ENCODE measurements at regions of chr21 and their contacts with region 1.

Region 1: GRCh38 chr21:42524349-42525151 is 10.9 kb downstream of the SLC37A1 start:
- DNase-seq: no peak
- H3K4me3 Mint-ChIP-seq: no peak overlapping the region
- H3K27ac Mint-ChIP-seq: no peak overlapping the region
- H3K4me1 Mint-ChIP-seq: peaks cover 49% of the 10 kb centered on the region
- H3K27me3 Mint-ChIP-seq: peaks cover 2% of the 10 kb centered on the region

Region 2: GRCh38 chr21:42145569-42146272 is 378.8 kb before region 1 on chr21:
- intact Hi-C with region 1: loop called (anchors 5 kb)
- DNase-seq: peak; percentile 55
- H3K4me3 Mint-ChIP-seq: no peak overlapping the region
- H3K27ac Mint-ChIP-seq: peak overlapping the region; percentile 25
- H3K4me1 Mint-ChIP-seq: peaks cover 10% of the 10 kb centered on the region
- H3K27me3 Mint-ChIP-seq: peaks cover 2% of the 10 kb centered on the region

Region 3: GRCh38 chr21:42400525-42400924 is 124.0 kb before region 1 on chr21:
- intact Hi-C with region 1: loop called (anchors 5 kb)
- DNase-seq: no peak
- H3K4me3 Mint-ChIP-seq: peak overlapping the region; percentile 58
- H3K27ac Mint-ChIP-seq: peak overlapping the region; percentile 88
- H3K4me1 Mint-ChIP-seq: peaks cover 65% of the 10 kb centered on the region
- H3K27me3 Mint-ChIP-seq: no peaks in the 10 kb centered on the region

Region 4: DNA sequence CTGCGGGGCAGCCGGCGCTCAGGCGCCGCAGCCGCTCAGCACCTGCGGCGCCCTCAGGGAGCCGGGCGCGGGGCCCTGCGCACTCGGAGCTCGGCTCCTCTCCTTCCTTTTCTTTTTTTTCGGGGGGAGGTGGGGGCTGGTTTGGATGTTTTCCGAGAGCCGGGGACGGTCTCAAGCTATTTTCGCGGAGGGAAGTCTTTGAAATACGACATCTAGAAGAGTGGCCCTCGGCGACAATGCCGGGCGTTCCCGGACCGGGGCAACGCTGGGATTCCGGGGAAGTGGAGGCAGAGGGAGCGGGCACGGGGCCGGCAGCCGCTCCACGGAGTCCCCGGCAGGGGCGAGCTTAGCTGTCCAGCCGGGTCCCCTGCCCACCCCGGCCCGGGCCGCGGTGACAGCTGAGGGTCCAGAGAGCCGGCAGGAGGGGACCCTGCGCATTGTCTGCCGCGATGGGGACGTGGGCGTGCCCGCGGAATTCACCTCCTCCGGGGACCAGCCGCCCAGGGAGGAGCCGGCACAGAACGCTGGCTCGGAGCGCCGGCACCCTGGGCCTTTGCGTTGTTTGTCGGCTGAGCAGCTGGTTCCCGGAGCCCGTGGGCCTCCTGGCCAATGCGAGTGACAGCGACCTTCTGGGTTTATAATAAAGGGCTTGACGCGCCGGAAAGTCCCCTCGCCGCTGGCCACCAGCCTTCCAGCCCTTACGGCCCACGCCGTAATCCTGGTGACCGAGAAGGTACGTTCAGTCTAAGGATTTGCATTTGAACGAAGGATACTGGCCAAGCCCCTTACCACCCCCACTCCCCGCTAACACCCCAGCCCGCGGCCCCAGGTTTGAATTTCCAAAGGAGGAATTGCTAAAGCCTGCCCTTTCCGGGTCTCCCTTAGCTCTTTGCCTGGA is 10.3 kb before region 1 on chr21:
- intact Hi-C with region 1: loop called (anchors 1 kb)
- DNase-seq: peak; percentile 55
- H3K4me3 Mint-ChIP-seq: peak overlapping the region; percentile 87
- H3K27ac Mint-ChIP-seq: peak overlapping the region; percentile 68
- H3K4me1 Mint-ChIP-seq: peaks cover 17% of the 10 kb centered on the region
- H3K27me3 Mint-ChIP-seq: peaks cover 9% of the 10 kb centered on the region

Region 5: DNA sequence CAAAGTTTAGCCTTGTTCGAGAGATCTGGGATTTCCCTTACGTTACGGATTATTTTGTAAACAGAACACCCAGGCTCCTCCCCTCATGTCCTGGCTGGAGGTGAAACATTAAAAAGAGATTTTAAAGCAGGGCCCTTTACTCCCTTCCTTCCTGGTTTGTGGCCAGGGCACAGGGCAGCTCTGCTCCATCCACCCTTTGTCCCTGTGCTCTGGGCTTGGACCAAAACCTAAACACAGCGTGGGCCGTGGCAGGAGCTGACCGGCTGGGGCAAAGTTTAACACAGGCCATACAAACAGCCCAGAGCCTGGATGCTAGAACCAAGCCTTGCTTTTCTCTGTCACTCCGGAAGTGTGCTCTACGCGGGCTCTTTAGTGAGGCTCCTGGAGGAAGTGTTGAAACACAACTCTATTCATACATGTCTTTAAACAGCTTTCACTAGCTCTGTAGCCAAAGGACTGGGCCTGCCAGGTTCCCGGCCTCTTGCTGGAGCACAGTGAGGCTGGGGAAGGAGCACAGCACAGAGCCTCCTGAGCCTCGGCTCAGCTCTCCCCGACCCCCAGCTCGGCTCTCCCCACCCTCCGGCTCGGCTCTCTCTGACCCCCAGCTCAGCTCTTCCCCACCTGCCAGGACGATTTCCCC is 213.5 kb after region 1 on chr21:
- intact Hi-C with region 1: loop called (anchors 5 kb)
- DNase-seq: peak; percentile 8
- H3K4me3 Mint-ChIP-seq: peak overlapping the region; percentile 77
- H3K27ac Mint-ChIP-seq: peak overlapping the region; percentile 98
- H3K4me1 Mint-ChIP-seq: peaks cover 57% of the 10 kb centered on the region
- H3K27me3 Mint-ChIP-seq: peaks cover 2% of the 10 kb centered on the region

Region 6: DNA sequence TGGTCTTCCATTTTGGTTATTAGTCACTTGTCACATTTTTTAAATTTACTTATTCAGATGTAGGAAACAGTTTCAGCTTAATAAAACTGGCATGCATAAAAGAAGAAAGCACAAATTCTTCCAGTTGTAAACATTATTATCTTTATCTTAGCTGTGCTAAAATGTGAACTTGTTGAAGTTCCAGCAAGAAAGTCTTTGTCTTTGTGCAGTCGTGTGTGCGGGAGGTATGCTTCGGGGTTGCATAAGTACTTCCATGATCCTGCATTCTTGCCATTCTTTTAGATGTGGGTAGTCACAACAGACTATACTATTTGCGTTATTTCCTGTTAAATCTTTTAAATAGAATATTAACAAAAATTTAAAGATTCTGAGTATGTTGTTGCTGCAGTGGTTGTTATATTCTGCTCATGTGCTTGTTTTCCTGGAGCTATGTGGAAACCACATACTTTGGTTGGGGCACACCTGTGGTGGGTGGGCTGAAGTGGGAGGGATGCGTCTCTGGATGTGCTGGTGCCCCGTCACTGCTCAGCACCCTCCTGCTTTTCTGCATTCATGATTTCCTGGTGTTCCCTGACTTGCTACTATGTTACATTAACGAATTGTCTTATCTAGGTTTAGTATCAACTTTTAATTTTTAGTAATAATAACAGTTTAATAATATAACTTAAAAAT is 501.2 kb after region 1 on chr21:
- intact Hi-C with region 1: no loop called
- DNase-seq: no peak
- H3K4me3 Mint-ChIP-seq: no peak overlapping the region
- H3K27ac Mint-ChIP-seq: no peak overlapping the region
- H3K4me1 Mint-ChIP-seq: no peaks in the 10 kb centered on the region
- H3K27me3 Mint-ChIP-seq: no peaks in the 10 kb centered on the region

Measured in activated T-helper 1 cell treated with anti-CD3 and anti-CD28 coated beads, Interleukin-12 subunit alpha, Interleukin-12 subunit beta, Interleukin-2, Interleukin-4 antibody, amounts not matched to agents 30 ng/mL and 10 ng/mL and 1 ng/mL, durations not matched to agents 14 hours and 24 hours and 36 hours (primary cell).